Upper lobe of right lung (tissue), 1 donor: ENCODE measurements at regions of chr9 and their contacts with region 1.

Region 1: GRCh38 chr9:4679268-4680172 is at the start of gene CDC37L1:
- DNase-seq: peak; percentile 99
- ATAC-seq: peak; percentile 99
- H3K4me3 ChIP-seq: peak within 1 kb of the TSS; percentile 69
- H3K27ac ChIP-seq: peak within 1 kb of the TSS; percentile 99
- H3K4me1 ChIP-seq: peaks cover 13% of the 10 kb centered on the region
- H3K27me3 ChIP-seq: no peaks in the 10 kb centered on the region
- CTCF ChIP-seq: peak; percentile 84
- total RNA-seq, gene CDC37L1: 23.6 TPM

Region 2: GRCh38 chr9:4739587-4740387 is 60.3 kb after region 1 on chr9:
- intact Hi-C with region 1: loop called (anchors 10 kb)
- DNase-seq: peak; percentile 65
- ATAC-seq: no peak
- H3K4me3 ChIP-seq: peak overlapping the region; percentile 72
- H3K27ac ChIP-seq: peak overlapping the region; percentile 88
- H3K4me1 ChIP-seq: peaks cover 21% of the 10 kb centered on the region
- H3K27me3 ChIP-seq: no peaks in the 10 kb centered on the region
- CTCF ChIP-seq: no peak

Region 3: DNA sequence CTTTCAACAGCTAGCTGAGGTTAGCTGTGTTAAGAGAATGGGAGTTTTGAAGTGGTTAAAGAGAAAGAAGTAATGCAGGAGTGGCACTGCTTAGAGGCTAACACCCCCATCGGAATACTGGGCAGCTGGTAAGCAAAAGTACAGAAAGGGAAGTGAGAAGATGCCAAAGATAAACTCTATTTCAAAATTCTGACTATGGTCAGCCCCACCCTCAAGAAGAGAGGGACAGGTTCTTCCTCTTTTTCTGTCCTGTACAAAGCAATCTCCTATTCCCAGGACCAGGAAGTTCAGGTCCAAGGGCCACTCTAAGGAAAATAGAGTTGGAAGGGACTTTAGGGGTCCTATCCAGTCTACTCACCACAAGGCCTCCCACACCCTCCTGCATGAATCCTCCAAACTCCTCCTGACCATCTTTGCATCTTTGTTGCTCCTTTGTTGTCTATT is 259.6 kb after region 1 on chr9:
- intact Hi-C with region 1: no loop called
- DNase-seq: no peak
- ATAC-seq: peak; percentile 91
- H3K4me3 ChIP-seq: no peak overlapping the region
- H3K27ac ChIP-seq: no peak overlapping the region
- H3K4me1 ChIP-seq: peaks cover 31% of the 10 kb centered on the region
- H3K27me3 ChIP-seq: no peaks in the 10 kb centered on the region
- CTCF ChIP-seq: no peak